Dorsolateral prefrontal cortex (tissue), 120 donors: ENCODE measurements at regions of chr20 and their contacts with region 1.

Region 1: DNA sequence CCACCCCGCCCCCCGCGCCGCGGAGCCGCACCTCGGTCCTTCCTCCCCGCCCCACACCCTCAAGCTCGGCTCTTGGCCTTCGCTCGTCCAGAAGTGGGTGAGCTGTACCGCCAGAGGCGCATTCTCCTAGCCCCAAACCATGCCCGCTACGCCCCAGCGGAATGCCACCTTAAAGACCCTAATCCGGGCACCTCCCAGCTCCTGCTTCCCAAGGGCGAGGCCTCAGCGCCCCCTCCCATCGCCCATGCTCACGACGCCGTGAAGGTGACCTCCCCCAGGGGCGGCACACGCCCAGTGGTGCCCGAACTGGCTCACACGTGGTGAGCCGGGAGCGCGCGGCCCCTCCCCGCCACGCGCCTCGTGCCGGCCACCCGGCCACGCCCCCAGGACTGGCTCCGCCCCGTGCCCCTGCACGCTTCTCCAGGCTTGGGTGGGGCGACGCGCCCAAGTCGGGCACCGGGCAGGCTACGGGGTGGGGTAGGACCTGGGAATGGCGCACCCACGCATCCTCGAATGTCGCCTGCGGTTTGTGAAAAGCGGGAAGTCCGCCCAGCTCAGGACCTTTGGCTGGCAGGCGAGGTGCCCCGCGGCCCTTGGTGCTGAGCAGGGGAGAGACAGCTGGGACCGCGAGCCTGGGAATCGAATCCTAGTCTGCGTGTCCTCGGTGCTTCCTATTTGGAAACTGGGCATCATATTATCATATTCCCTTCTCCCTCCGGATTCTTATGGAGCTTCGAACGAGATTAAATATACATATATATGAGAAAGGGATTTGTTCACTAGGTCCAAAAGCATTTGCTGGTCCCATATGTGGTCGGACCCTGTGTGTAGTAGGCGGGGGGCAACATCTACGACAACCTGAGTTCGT is 941 bp upstream of the SOX12 start:
- DNase-seq: peak; percentile 67 to 92 (median 82)
- H3K4me3 ChIP-seq: peak overlapping the region; percentile 62 to 90 (median 79)
- H3K27ac ChIP-seq: peak overlapping the region; percentile 62 to 99 (median 94)
- H3K27me3 ChIP-seq: no peaks in the 10 kb centered on the region
- CTCF ChIP-seq: peak in 23 of 56 donors; percentile 4 to 38 (median 24)

Region 2: GRCh38 chr20:297098-297924 is 27.1 kb before region 1 on chr20 and contains the start of gene ZCCHC3:
- intact Hi-C with region 1: loop called in 1 of 2 experiments (anchors 1 kb)
- DNase-seq: peak; percentile 52 to 84 (median 71)
- H3K4me3 ChIP-seq: peak within 1 kb of the TSS; percentile 61 to 97 (median 90)
- H3K27ac ChIP-seq: peak within 1 kb of the TSS; percentile 88 to 100 (median 98)
- H3K27me3 ChIP-seq: no peaks in the 10 kb centered on the region
- CTCF ChIP-seq: peak in 38 of 56 donors; percentile 8 to 56 (median 30)
- total RNA-seq, gene ZCCHC3: 9.8 to 20.7 (median 14.3) TPM

Region 3: GRCh38 chr20:309841-310644 is 14.4 kb before region 1 on chr20:
- intact Hi-C with region 1: loop called (anchors 1 kb)
- DNase-seq: peak; percentile 98 to 100 (median 100)
- H3K4me3 ChIP-seq: peak overlapping the region; percentile 47 to 91 (median 66)
- H3K27ac ChIP-seq: peak overlapping the region; percentile 81 to 99 (median 96)
- H3K27me3 ChIP-seq: no peaks in the 10 kb centered on the region
- CTCF ChIP-seq: peak in 5 of 56 donors; percentile 2 to 30 (median 9)

Region 4: DNA sequence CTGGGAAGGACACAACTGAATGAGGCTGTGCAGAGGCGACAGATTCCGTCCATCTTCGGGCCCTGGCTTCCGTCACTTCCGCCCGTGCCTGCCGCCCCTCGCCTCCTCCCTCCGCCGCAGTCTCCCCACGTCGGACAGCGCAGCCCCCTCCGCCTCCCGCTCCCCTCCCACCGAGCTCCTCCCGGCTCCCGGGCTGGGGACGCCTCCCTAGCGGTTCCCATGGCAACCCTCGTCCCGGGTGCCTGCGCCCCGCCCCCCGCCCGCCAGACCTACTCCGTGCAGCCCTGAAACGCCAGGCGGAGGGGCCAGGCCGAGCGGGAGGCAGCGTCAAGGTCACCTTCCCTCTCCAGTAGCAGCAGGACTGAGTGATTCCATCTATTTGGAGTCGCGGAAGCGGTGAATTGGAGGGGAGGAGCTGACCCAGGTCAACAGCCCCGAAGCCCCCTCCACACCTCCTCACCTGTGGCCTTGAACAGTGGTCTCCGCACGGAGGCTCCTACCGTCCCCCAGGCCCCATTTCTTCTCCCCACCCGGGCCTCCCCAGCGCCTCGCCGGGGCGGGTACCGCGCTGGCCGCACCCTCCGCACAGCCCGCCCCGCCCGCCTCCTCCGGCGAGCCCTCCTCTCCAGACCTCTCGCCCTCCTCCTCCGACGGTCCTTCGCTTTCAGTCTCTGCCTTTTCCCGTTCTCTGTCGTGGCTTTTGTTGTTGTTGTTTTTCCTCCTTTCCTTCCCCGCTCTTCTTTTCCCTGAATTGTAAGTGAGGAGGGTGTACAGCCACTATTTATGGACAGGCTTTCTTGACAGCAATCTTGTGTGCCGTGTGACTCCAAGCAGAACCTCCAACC is 23.5 kb after region 1 on chr20:
- intact Hi-C with region 1: loop called in 1 of 2 experiments (anchors 2 kb)
- DNase-seq: peak; percentile 73 to 96 (median 92)
- H3K4me3 ChIP-seq: peak overlapping the region; percentile 53 to 93 (median 81)
- H3K27ac ChIP-seq: peak overlapping the region; percentile 32 to 98 (median 94)
- H3K27me3 ChIP-seq: no peaks in the 10 kb centered on the region
- CTCF ChIP-seq: peak in 3 of 56 donors; percentile 6 to 17 (median 12)